ENCODE measurements at regions of chr5 and their contacts with region 1.

Region 1: GRCh38 chr5:146533260-146533857 is 17.4 kb upstream of the GPR151 start:
- DNase-seq: peak; percentile 90
- H3K4me3 Mint-ChIP-seq: no peak overlapping the region
- H3K27ac Mint-ChIP-seq: no peak overlapping the region
- H3K4me1 Mint-ChIP-seq: peaks cover 8% of the 10 kb centered on the region
- H3K27me3 Mint-ChIP-seq: no peaks in the 10 kb centered on the region
- CTCF ChIP-seq: peak; percentile 96

Region 2: DNA sequence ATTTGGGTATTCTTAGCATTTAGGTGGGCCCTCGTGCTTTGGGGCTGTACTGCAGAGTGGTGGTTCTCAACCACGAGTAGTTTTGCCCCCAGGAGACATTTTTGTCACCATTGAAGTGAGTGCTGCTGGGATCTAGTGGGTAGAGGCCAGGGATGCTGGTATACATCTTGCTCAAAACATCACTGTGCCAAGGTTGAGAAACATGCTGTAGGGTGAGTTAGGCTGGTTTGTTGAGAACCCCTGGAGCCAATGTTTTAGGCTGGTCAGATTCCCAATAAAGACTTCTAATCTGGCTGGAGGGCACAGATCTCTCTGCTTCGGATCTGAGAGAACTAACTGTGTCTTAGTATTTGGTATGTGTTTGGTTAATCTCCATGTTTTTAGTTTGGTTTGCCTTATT is 42.1 kb before region 1 on chr5:
- CTCF ChIA-PET with region 1: interaction called, 10 read pairs
- POLR2A ChIA-PET with region 1: no interaction called
- intact Hi-C with region 1: no loop called
- DNase-seq: no peak
- H3K4me3 Mint-ChIP-seq: no peak overlapping the region
- H3K27ac Mint-ChIP-seq: no peak overlapping the region
- H3K4me1 Mint-ChIP-seq: no peaks in the 10 kb centered on the region
- H3K27me3 Mint-ChIP-seq: no peaks in the 10 kb centered on the region
- CTCF ChIP-seq: no peak

Region 3: DNA sequence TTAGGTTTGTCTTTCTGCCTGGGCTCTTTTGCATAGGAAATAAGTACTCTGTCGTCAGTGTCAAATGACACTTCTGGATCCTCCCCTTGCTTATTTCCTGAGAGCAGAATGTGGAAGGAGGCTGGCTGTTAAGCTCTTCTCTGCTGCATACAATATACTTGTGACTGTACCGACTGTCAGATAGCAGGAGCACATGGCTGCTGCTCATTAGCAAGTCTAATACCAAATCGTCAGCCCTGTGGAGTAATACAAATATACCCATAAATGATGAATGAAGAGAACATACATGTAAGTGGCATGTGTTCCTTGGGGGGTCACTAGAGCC is 17.2 kb before region 1 on chr5 and contains the start of gene GPR151:
- CTCF ChIA-PET with region 1: interaction called, 36 read pairs
- POLR2A ChIA-PET with region 1: interaction called, 5 read pairs
- intact Hi-C with region 1: no loop called
- DNase-seq: no peak
- H3K4me3 Mint-ChIP-seq: no peak within 1 kb of the TSS
- H3K27ac Mint-ChIP-seq: no peak within 1 kb of the TSS
- H3K4me1 Mint-ChIP-seq: no peaks in the 10 kb centered on the region
- H3K27me3 Mint-ChIP-seq: no peaks in the 10 kb centered on the region
- CTCF ChIP-seq: no peak
- total RNA-seq, gene GPR151: not detected in 2 replicates

Region 4: GRCh38 chr5:146924132-146924531 is 390.8 kb after region 1 on chr5:
- CTCF ChIA-PET with region 1: interaction called, 11 read pairs
- POLR2A ChIA-PET with region 1: no interaction called
- intact Hi-C with region 1: no loop called
- DNase-seq: no peak
- H3K4me3 Mint-ChIP-seq: no peak overlapping the region
- H3K27ac Mint-ChIP-seq: no peak overlapping the region
- H3K4me1 Mint-ChIP-seq: no peaks in the 10 kb centered on the region
- H3K27me3 Mint-ChIP-seq: no peaks in the 10 kb centered on the region
- CTCF ChIP-seq: no peak